H1 (cell line): ENCODE measurements at regions of chr17 and their contacts with region 1.

Region 1: DNA sequence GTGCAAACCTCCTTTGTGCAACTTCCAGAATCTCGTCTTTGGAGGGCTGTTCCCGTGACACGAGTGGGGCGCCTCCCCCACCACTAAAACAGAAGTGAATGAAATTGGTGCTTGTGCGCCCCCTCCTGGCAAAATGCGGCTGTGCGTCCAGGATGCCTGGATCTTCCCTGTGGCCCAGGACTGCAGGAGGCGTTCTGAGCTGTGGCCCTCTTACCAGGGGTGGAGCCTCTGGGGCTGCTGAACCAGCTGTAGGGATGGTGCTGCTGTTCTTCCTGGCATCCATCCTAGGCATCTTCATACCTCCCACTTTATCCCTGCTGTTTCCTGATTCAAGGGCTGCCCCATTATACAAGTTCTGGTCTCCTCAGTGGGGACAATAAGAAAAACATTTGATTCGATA is 18.5 kb upstream of the NAGLU start:
- DNase-seq: peak; percentile 54 to 96
- H3K4me3 ChIP-seq: no peak overlapping the region
- H3K27ac ChIP-seq: no peak overlapping the region
- H3K4me1 ChIP-seq: peaks cover 6 to 18% (median 15%) of the 10 kb centered on the region in 4 experiments
- H3K27me3 ChIP-seq: no peaks in the 10 kb centered on the region; a peak in 4 of 7 replicates
- CTCF ChIP-seq: peak; percentile 92 to 99 (median 99)
- EP300 ChIP-seq: no peak
- POLR2A ChIP-seq: no peak
- RAD21 ChIP-seq: peak; percentile 71 to 73

Region 2: GRCh38 chr17:42322382-42323267 is 194.9 kb before region 1 on chr17:
- CTCF ChIA-PET with region 1: interaction called, 12 read pairs
- POLR2A ChIA-PET with region 1: no interaction called
- DNase-seq: peak; percentile 92 to 97
- H3K4me3 ChIP-seq: no peak overlapping the region
- H3K27ac ChIP-seq: no peak overlapping the region
- H3K4me1 ChIP-seq: peaks cover 0 to 6% (median 2%) of the 10 kb centered on the region in 4 experiments; a peak in 3 of 7 replicates
- H3K27me3 ChIP-seq: no peaks in the 10 kb centered on the region
- CTCF ChIP-seq: peak; percentile 100
- EP300 ChIP-seq: no peak
- POLR2A ChIP-seq: no peak
- RAD21 ChIP-seq: peak; percentile 99 to 100

Region 3: DNA sequence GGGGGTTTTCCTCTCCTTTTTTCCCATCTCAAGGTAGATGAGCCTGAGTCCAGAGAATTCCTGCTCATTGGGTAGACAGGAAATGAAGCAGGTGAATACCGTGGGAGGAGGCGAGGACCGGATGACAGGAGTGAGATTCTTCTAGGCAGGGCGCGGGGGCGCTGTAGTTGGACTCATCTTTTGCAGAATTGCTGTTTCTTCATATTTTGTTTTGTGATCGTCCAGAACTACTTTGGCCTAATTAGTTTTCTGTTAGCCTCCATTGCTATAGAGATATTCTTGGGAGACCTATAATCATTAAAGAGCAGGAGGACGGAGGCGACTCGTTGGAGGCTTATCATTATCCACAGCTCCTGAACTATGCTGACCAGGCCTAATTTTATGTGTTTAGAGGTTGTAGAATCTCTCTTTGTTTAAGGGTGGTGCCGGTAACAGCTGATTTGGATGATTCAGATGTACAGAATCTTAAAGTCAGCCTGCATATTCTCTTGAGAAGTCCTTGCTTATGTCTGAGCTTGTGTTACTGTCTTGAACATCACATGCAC is 58.2 kb before region 1 on chr17:
- CTCF ChIA-PET with region 1: interaction called, 11 read pairs
- POLR2A ChIA-PET with region 1: no interaction called
- DNase-seq: no peak
- H3K4me3 ChIP-seq: peak overlapping the region; percentile 49 to 87 (median 75)
- H3K27ac ChIP-seq: no peak overlapping the region
- H3K4me1 ChIP-seq: peaks cover 0 to 8% (median 4%) of the 10 kb centered on the region in 4 experiments; a peak in 3 of 7 replicates
- H3K27me3 ChIP-seq: no peaks in the 10 kb centered on the region
- CTCF ChIP-seq: peak in 2 of 3 experiments; percentile 30 to 45; a peak in 2 of 4 replicates
- EP300 ChIP-seq: no peak
- POLR2A ChIP-seq: no peak
- RAD21 ChIP-seq: no peak; a peak in 1 of 4 replicates

Region 4: DNA sequence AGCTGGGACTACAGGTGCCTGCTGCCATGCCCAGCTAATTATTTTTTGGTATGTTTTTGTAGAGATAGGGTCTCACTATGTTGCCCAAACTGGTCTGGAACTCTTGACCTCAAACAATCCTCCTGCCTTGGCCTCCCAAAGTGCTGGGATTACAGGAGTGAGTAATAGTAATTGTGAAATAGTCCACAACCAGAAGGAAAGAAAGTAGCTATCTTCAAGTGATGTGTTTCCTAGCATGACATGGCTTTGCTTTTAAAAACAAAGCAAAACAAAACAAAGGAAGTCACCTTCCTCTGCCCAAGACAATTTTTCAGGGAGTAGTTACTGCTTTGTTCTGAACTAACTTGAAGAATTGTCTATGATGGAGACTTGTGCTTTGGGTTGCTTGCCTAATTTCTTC is 31.8 kb before region 1 on chr17:
- CTCF ChIA-PET with region 1: interaction called, 10 read pairs
- POLR2A ChIA-PET with region 1: interaction called, 3 read pairs
- DNase-seq: no peak
- H3K4me3 ChIP-seq: no peak overlapping the region
- H3K27ac ChIP-seq: no peak overlapping the region
- H3K4me1 ChIP-seq: no peaks in the 10 kb centered on the region
- H3K27me3 ChIP-seq: no peaks in the 10 kb centered on the region
- CTCF ChIP-seq: no peak
- EP300 ChIP-seq: no peak
- POLR2A ChIP-seq: no peak
- RAD21 ChIP-seq: no peak

Region 5: DNA sequence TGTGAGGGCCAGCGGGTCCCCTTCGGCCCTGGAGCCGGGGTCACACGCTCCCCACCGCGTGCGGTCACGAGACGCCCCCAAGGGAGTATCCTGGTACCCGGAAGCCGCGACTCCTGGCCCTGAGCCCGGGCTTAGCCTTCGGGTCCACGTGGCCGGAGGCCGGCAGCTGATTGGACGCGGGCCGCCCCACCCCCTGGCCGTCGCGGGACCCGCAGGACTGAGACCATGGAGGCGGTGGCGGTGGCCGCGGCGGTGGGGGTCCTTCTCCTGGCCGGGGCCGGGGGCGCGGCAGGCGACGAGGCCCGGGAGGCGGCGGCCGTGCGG is 18.5 kb after region 1 on chr17 and contains the start of gene NAGLU:
- CTCF ChIA-PET with region 1: interaction called, 69 read pairs
- POLR2A ChIA-PET with region 1: interaction called, 14 read pairs
- DNase-seq: peak in 1 of 2 experiments; percentile 93
- H3K4me3 ChIP-seq: peak within 1 kb of the TSS; percentile 50 to 72 (median 62)
- H3K27ac ChIP-seq: peak within 1 kb of the TSS; percentile 66
- H3K4me1 ChIP-seq: peaks cover 0 to 15% (median 13%) of the 10 kb centered on the region in 4 experiments; a peak in 6 of 7 replicates
- H3K27me3 ChIP-seq: peaks cover 0 to 6% (median 0%) of the 10 kb centered on the region in 4 experiments; a peak in 2 of 7 replicates
- CTCF ChIP-seq: no peak
- EP300 ChIP-seq: no peak
- POLR2A ChIP-seq: no peak
- RAD21 ChIP-seq: no peak
- total RNA-seq, gene NAGLU: 19.4 and 21.3 TPM in 2 replicates

Region 6: GRCh38 chr17:42586514-42587230 is 69.2 kb after region 1 on chr17:
- CTCF ChIA-PET with region 1: no interaction called
- POLR2A ChIA-PET with region 1: no interaction called
- DNase-seq: no peak
- H3K4me3 ChIP-seq: no peak overlapping the region
- H3K27ac ChIP-seq: no peak overlapping the region
- H3K4me1 ChIP-seq: no peaks in the 10 kb centered on the region
- H3K27me3 ChIP-seq: no peaks in the 10 kb centered on the region
- CTCF ChIP-seq: no peak
- EP300 ChIP-seq: no peak
- POLR2A ChIP-seq: no peak
- RAD21 ChIP-seq: no peak

Region 7: DNA sequence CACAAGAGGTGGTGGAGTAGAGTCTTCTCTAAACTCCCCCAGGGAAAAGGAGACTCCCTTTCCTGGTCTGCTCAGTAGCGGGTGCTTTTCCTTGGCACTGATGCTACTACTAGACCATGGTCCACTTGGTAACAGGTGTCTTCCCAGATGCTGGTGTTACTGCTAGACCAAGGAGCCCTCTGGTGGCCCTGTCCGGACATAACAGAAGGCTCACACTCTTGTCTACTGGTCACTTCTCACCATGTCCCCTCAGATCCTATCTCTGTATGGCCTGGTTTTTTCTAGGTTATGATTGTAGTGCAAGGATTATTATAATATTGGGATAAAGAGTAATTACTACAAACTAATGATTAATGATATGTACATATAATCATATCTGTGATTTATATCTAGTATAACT is 831.6 kb after region 1 on chr17:
- CTCF ChIA-PET with region 1: no interaction called
- POLR2A ChIA-PET with region 1: no interaction called
- DNase-seq: no peak
- H3K4me3 ChIP-seq: no peak overlapping the region
- H3K27ac ChIP-seq: no peak overlapping the region
- H3K4me1 ChIP-seq: peaks cover 0 to 10% (median 1%) of the 10 kb centered on the region in 4 experiments; a peak in 3 of 7 replicates
- H3K27me3 ChIP-seq: no peaks in the 10 kb centered on the region
- CTCF ChIP-seq: peak in 2 of 3 experiments; percentile 29 to 47; a peak in 2 of 4 replicates
- EP300 ChIP-seq: no peak
- POLR2A ChIP-seq: no peak
- RAD21 ChIP-seq: peak; percentile 35 to 49; a peak in 3 of 4 replicates